ENCODE measurements at regions of chr5 and their contacts with region 1.

Region 1: GRCh38 chr5:133154274-133155074 is 102.7 kb downstream of the HSPA4 start:
- DNase-seq: no peak
- H3K4me3 ChIP-seq: no peak overlapping the region
- H3K27ac ChIP-seq: no peak overlapping the region
- H3K4me1 ChIP-seq: no peaks in the 10 kb centered on the region
- H3K27me3 ChIP-seq: no peaks in the 10 kb centered on the region
- CTCF ChIP-seq: no peak

Region 2: DNA sequence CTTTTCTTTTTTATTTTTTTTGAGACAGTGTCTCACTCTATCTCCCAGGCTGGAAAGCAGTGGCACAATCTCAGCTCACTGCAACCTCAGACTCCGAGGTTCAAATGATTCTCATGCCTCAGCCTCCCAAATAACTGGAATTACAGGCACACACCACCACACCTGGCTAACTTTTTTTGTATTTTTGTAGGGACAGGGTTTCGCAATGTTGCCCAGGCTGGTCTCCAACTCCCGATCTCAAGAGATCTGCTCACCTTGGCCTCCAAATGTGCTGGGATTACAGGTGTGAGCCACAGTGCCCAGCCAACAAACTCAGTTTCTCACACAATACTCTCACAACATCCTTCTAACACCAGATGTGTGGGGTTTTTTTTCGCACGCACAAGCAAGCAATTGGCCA is 213.1 kb before region 1 on chr5:
- intact Hi-C with region 1: no loop called
- DNase-seq: no peak
- H3K4me3 ChIP-seq: no peak overlapping the region
- H3K27ac ChIP-seq: no peak overlapping the region
- H3K4me1 ChIP-seq: peaks cover 71% of the 10 kb centered on the region
- H3K27me3 ChIP-seq: no peaks in the 10 kb centered on the region
- CTCF ChIP-seq: no peak

Region 3: GRCh38 chr5:133489632-133490031 is 335.2 kb after region 1 on chr5:
- intact Hi-C with region 1: loop called (anchors 10 kb)
- DNase-seq: no peak
- H3K4me3 ChIP-seq: no peak overlapping the region
- H3K27ac ChIP-seq: no peak overlapping the region
- H3K4me1 ChIP-seq: no peaks in the 10 kb centered on the region
- H3K27me3 ChIP-seq: peaks cover 26% of the 10 kb centered on the region
- CTCF ChIP-seq: no peak